T-cell (primary cell): ENCODE measurements at regions of chr5 and their contacts with region 1.

Region 1: DNA sequence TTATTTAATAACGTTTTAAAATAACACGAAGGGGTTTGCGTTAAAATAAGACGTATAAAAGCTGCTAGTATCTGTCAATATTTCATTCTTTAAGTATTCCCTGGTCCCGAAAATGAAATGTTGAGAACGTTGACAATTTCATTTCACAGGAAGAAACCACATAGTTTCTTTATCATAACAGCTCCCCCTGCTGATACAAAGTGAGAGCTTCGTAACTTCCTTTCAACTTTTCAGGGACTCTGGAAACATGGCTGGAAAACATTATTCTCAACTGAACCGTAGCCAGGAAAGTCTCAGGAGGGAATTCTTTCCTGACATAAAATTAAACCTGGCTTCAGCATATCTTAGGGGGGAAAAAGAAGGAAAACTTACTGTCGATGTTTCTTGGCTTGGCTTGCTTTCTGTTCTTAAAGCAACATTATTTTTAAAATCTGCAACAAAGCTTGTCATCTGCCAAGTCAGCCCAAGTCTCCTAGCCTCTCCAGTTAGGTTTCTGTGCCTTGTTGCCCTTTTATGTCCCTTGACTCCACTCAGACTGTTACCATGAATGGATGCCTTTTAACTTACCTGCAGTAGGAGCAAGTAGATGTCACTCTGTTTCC is 122.9 kb upstream of the DAB2 start:
- DNase-seq: peak in 9 of 35 experiments; percentile 1 to 67 (median 12)
- ATAC-seq: peak in 2 of 4 experiments; percentile 35 to 47
- H3K4me3 ChIP-seq: no peak overlapping the region
- H3K4me3 Mint-ChIP-seq: peak overlapping the region in 1 of 3 donors; percentile 6
- H3K27ac ChIP-seq: no peak overlapping the region
- H3K27ac Mint-ChIP-seq: no peak overlapping the region
- H3K4me1 ChIP-seq: no peaks in the 10 kb centered on the region
- H3K4me1 Mint-ChIP-seq: peaks cover 3 to 8% (median 8%) of the 10 kb centered on the region in 3 donors
- H3K27me3 ChIP-seq: no peaks in the 10 kb centered on the region
- H3K27me3 Mint-ChIP-seq: peaks cover 2 to 6% of the 10 kb centered on the region in 2 donors

Region 2: GRCh38 chr5:39376293-39376714 is 171.3 kb before region 1 on chr5:
- CTCF ChIA-PET with region 1: interaction called, 11 to 21 read pairs
- POLR2A ChIA-PET with region 1: no interaction called
- DNase-seq: peak in 15 of 35 experiments; percentile 2 to 61 (median 9)
- ATAC-seq: peak in 2 of 4 experiments; percentile 38 to 55
- H3K4me3 ChIP-seq: no peak overlapping the region
- H3K4me3 Mint-ChIP-seq: no peak overlapping the region
- H3K27ac ChIP-seq: no peak overlapping the region
- H3K27ac Mint-ChIP-seq: no peak overlapping the region
- H3K4me1 ChIP-seq: no peaks in the 10 kb centered on the region
- H3K4me1 Mint-ChIP-seq: no peaks in the 10 kb centered on the region
- H3K27me3 ChIP-seq: peaks cover 0 to 4% of the 10 kb centered on the region in 2 experiments
- H3K27me3 Mint-ChIP-seq: peaks cover 2 to 6% of the 10 kb centered on the region in 2 donors

Region 3: DNA sequence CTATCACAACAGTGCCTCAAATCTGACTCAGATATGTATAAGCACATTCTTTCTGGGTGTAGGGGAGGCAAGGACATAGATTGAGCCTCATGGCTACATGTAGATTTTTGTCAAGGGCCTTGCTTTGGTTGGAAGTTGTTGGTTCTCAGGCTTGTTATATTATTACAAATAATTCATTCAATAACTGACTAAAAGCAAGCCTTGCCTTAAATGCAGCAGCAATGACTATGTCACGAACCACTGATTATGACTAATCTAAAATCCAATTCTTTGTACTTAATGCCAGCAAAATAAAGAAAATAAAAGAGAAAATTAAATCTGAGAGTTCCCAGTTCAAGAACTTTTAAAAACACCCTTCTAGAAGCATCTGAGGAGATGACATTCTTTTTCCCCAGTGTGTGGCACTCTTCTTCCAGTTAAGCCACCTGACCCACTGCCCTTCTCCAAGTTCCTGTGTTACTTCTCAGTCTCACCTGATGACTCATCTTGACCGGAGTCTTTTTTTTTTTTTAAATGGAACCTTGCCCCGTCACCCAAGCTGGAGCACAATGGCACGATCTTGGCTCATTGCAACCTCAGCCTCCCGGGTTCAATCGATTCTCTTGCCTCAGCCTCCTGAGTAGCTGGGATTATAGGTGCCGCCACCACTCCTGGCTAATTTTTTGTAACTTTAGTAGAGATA is 101.0 kb after region 1 on chr5:
- CTCF ChIA-PET with region 1: no interaction called
- POLR2A ChIA-PET with region 1: no interaction called
- DNase-seq: no peak
- ATAC-seq: no peak
- H3K4me3 ChIP-seq: no peak overlapping the region
- H3K4me3 Mint-ChIP-seq: no peak overlapping the region
- H3K27ac ChIP-seq: no peak overlapping the region
- H3K27ac Mint-ChIP-seq: no peak overlapping the region
- H3K4me1 ChIP-seq: no peaks in the 10 kb centered on the region
- H3K4me1 Mint-ChIP-seq: peaks cover 0 to 2% (median 0%) of the 10 kb centered on the region in 3 donors
- H3K27me3 ChIP-seq: no peaks in the 10 kb centered on the region
- H3K27me3 Mint-ChIP-seq: peaks cover 0 to 3% of the 10 kb centered on the region in 2 donors